Caco-2 (cell line): ENCODE measurements at regions of chr4 and their contacts with region 1.

Region 1: GRCh38 chr4:40976343-40976742 is 226.6 kb downstream of the NSUN7 start:
- DNase-seq: peak in 1 of 2 experiments; percentile 60
- H3K4me3 ChIP-seq: no peak overlapping the region
- H3K4me3 Mint-ChIP-seq: no peak overlapping the region
- H3K27ac Mint-ChIP-seq: no peak overlapping the region
- H3K4me1 ChIP-seq: no peaks in the 10 kb centered on the region
- H3K4me1 Mint-ChIP-seq: peaks cover 14% of the 10 kb centered on the region
- H3K27me3 ChIP-seq: no peaks in the 10 kb centered on the region
- H3K27me3 Mint-ChIP-seq: no peaks in the 10 kb centered on the region
- CTCF ChIP-seq: peak; percentile 59 to 64

Region 2: DNA sequence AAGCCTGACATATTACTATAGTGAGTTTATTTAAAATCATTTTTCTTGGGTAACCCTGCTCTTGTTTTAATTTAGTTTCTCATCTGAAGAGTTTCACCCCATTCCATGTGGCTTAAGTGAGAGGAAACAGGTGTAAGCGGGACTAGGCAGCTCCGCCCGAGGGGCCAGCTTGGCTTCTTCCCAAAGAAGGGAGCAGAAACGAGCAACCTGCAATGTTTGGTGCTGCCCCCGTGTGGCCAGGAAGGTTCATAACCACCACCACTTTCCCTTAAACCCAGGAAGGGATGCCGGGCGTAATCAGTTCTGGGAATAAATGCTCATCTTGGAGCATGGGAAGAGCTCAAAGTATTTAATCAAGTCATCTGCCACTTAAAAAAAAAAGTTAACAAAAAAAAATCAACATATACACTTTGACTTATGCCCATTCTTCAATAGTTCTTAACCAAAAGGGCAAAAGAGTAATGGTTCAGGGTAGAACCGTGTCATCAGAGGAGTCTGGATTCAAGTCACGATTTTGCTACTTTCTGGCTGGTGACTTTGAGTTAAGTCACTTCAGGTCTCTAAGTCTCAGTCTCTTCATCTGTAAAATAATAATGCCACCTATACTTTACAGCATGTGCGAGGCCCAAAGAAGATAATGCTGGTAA is 78.7 kb before region 1 on chr4:
- CTCF ChIA-PET with region 1: no interaction called
- POLR2A ChIA-PET with region 1: no interaction called
- intact Hi-C with region 1: no loop called
- DNase-seq: peak; percentile 51 to 72
- H3K4me3 ChIP-seq: no peak overlapping the region
- H3K4me3 Mint-ChIP-seq: peak overlapping the region; percentile 30
- H3K27ac Mint-ChIP-seq: no peak overlapping the region
- H3K4me1 ChIP-seq: no peaks in the 10 kb centered on the region
- H3K4me1 Mint-ChIP-seq: peaks cover 9% of the 10 kb centered on the region
- H3K27me3 ChIP-seq: no peaks in the 10 kb centered on the region
- H3K27me3 Mint-ChIP-seq: no peaks in the 10 kb centered on the region
- CTCF ChIP-seq: peak; percentile 61 to 67

Region 3: DNA sequence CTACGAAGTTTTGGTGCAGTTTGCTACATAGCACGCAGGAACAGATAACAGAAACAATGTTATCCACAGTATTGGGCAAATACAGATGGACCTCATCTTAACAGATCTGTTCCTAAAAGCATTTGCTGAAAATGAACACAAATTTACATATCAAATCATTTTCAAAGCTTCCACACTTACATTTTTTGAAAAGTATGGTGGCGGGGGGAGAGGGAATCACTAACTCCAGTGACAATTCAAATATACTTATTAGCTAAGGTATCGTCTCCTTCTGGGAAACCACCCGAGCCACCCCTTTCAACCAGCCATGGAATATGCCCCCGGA is 51.6 kb before region 1 on chr4:
- CTCF ChIA-PET with region 1: interaction called, 3 read pairs
- POLR2A ChIA-PET with region 1: no interaction called
- intact Hi-C with region 1: loop called (anchors 5 kb)
- DNase-seq: no peak
- H3K4me3 ChIP-seq: no peak overlapping the region
- H3K4me3 Mint-ChIP-seq: no peak overlapping the region
- H3K27ac Mint-ChIP-seq: no peak overlapping the region
- H3K4me1 ChIP-seq: no peaks in the 10 kb centered on the region
- H3K4me1 Mint-ChIP-seq: no peaks in the 10 kb centered on the region
- H3K27me3 ChIP-seq: no peaks in the 10 kb centered on the region
- H3K27me3 Mint-ChIP-seq: no peaks in the 10 kb centered on the region
- CTCF ChIP-seq: no peak

Region 4: DNA sequence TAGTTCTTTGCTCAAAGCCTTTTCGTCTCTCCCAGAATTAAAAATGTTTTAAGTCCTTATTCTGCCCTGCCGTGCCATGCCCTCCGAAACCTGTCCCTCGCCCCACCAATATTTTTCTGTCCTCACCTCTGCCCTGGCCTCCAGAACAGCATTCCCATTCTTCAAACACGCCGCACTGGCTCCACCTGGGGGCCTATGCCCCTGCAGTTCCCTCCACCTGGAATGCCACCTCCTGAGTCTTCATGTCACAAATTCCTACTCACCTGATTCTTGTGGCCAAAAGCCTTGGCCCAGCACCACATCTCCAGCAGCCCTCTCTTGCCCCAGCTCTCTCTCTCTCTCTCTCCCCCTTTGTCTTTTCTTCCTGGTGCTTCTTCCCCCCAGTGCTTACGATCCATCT is 146.4 kb after region 1 on chr4:
- CTCF ChIA-PET with region 1: no interaction called
- POLR2A ChIA-PET with region 1: no interaction called
- intact Hi-C with region 1: no loop called
- DNase-seq: peak; percentile 48 to 57
- H3K4me3 ChIP-seq: no peak overlapping the region
- H3K4me3 Mint-ChIP-seq: peak overlapping the region; percentile 21
- H3K27ac Mint-ChIP-seq: peak overlapping the region; percentile 96
- H3K4me1 ChIP-seq: peaks cover 79% of the 10 kb centered on the region
- H3K4me1 Mint-ChIP-seq: peaks cover 28% of the 10 kb centered on the region
- H3K27me3 ChIP-seq: no peaks in the 10 kb centered on the region
- H3K27me3 Mint-ChIP-seq: no peaks in the 10 kb centered on the region
- CTCF ChIP-seq: peak; percentile 21 to 30

Region 5: DNA sequence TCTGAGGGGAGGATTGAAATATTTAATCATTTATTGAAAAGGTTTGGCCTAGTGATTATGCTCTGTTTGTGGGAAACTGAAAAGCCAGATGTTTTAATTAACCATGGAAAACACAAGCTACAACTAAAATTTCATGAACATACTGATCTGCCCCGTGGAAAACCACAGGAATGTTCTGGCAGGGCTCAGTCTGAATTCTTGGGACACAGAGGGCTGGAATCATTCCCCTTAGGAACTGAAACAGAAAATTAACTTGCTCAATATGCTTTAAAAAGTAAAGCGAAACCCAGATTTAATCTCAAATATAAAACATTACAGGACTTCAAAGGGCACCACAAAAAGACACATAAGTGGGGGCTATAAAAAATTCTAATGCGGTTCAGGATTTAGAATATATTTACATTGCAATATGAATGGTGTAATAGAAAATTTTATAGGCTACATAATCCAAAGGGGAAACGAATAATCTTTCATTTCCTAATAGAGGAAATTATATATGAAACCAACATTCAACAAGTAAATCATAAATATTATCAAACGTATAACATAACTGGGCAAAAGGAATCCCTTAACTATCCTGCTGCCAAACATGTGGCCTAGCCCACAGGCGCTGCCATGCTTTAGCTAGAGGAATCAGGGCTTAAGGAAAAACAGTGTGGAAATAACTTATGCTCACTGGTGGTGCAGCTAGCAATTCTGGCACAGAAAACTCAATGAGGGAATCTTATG is 167.1 kb after region 1 on chr4:
- CTCF ChIA-PET with region 1: no interaction called
- POLR2A ChIA-PET with region 1: no interaction called
- intact Hi-C with region 1: no loop called
- DNase-seq: no peak
- H3K4me3 ChIP-seq: no peak overlapping the region
- H3K4me3 Mint-ChIP-seq: no peak overlapping the region
- H3K27ac Mint-ChIP-seq: peak overlapping the region; percentile 45
- H3K4me1 ChIP-seq: peaks cover 39% of the 10 kb centered on the region
- H3K4me1 Mint-ChIP-seq: peaks cover 33% of the 10 kb centered on the region
- H3K27me3 ChIP-seq: no peaks in the 10 kb centered on the region
- H3K27me3 Mint-ChIP-seq: no peaks in the 10 kb centered on the region
- CTCF ChIP-seq: no peak